PC-9 (cell line): ENCODE measurements at regions of chr19 and their contacts with region 1.

Region 1: DNA sequence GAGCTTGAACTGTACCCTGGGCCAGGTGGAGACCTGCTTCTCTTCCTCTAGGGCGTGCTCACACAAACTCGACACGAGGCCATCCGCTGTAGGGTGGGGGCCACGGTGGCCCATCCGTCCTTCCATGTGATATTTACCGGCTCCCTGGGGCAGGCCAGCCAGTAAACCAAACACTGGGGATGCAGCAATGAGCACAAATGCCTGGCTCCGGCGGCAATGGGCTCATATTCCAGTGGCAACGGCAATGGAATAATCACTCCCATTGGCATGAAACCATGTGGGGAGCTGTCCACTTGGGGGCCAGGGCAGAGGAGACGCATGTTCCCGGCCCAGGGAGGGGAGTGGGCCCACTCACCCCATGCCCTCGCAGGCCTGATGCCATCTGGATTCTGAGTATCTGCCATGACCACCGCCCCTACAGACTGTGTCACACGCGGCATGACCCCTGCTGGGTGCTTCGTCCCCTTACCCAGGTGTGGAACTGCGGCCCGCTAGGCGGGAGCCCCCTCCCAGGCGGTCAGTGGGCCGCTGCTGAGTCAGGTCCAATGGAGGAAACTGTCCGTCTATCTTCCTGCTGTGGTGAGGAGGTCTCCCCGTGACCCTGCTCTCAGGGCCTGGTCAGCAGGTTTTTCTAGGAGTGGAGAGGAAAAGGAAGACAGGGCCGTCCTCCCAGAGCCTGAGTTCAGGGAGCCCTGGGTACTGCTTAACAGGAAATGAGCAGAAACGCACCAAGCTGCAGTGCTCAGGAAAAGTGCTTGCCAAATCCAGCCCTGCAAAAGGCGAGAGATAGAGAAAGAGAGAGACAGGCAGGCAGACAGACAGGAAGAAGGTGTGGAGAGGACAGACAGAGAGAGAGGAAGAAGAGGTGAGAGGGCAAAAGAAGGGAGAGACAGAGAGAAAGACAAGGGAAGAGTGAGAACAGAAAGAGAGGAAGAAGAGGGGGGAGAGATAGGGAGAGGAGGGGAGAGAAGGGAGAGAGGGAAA is 10.5 kb downstream of the SH3GL1 start:
- DNase-seq: no peak
- H3K4me3 ChIP-seq: no peak overlapping the region
- H3K27ac ChIP-seq: no peak overlapping the region
- H3K4me1 ChIP-seq: peaks cover 16% of the 10 kb centered on the region
- H3K27me3 ChIP-seq: no peaks in the 10 kb centered on the region
- CTCF ChIP-seq: no peak

Region 2: DNA sequence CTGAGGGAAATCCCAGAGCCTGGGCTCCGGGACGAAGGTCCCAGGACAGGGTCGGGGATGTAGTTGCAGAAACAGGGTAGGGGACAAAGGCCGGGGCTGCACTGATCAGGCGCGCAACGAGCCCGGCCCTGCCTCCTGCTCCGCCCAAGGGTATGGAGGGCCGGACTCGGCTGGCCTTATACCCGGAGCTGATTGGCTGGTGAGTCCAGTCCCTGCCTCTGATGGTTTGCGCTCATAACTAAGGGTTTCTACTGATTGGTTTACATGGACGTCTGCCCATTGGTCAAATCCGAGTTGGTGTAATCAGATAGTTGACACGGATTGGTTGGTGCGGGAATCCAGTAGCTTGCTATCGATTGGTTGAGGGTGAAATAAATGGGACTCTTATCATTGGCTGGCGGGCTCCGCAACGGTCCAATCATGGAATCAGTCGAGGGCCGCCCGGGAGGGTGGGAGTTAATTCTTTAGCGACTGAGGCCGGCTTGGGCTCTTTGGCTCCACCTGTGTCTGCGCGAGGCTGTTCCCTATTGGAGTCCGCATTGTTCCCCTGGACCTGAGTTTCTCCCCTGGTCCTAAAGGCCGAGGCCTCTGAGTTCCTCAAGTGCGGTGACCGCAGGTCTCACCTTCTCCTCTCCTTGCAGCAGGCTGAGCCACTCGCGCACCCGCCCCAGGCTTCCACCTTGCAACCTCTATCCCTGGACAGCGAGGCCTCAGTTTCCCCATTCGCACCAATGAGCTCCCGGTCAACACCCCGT is 47.1 kb before region 1 on chr19:
- CTCF ChIA-PET with region 1: no interaction called
- POLR2A ChIA-PET with region 1: interaction called, 29 read pairs
- intact Hi-C with region 1: no loop called
- DNase-seq: peak; percentile 90 to 98
- H3K4me3 ChIP-seq: peak overlapping the region; percentile 61
- H3K27ac ChIP-seq: peak overlapping the region; percentile 56
- H3K4me1 ChIP-seq: no peaks in the 10 kb centered on the region
- H3K27me3 ChIP-seq: no peaks in the 10 kb centered on the region
- CTCF ChIP-seq: no peak

Region 3: DNA sequence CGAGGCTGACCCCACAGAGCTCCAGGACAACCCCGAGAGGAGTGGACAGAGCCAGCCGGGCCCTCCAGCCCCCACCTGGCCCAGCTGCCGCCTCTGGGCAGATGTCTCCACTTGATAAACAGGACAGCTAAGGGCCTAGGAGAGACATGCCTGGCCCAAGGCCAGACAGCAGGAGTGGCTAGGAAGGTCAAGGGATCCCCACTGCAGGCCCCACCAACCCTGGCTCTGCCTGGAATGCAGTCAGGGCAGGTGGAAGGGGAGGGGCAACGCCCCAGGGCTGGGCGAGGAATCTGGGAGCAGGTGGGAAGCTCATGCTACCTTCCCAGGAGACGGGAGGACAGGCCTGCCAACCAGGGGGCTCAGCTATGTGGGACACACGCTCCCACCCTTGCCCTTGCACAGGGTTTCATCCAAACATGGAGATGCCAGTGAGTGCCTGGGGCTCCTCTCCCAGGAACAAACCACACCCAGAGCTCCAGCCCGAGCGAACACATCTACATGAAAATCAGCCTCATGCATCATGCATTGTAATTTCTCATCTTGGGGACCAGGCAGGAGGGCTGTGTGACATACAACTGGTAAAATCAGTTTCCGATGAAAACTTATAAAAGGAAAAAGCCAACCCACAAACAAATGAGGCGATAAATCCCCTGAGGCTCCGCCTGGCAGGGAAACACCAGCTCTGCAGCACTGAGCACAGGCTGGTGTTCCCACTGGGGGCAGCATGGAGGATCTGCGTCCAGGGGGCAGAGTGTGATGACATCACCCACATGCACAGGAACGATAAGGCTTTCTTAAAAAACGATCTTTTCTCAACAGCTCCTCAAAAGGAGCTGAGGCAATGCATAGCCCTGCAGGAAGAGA is 14.5 kb before region 1 on chr19:
- CTCF ChIA-PET with region 1: interaction called, 5 read pairs
- POLR2A ChIA-PET with region 1: no interaction called
- intact Hi-C with region 1: loop called (anchors 1 kb)
- DNase-seq: peak; percentile 92 to 97
- H3K4me3 ChIP-seq: peak overlapping the region; percentile 42; the same call in 1 of the 2 replicates
- H3K27ac ChIP-seq: peak overlapping the region; percentile 95
- H3K4me1 ChIP-seq: peaks cover 68% of the 10 kb centered on the region
- H3K27me3 ChIP-seq: no peaks in the 10 kb centered on the region
- CTCF ChIP-seq: no peak; the same call in 1 of the 2 replicates